SK-N-SH (cell line): ENCODE measurements at regions of chr5 and their contacts with region 1.

Region 1: GRCh38 chr5:170225326-170226128 is 7.3 kb upstream of the C5orf58 start:
- DNase-seq: peak; percentile 70
- H3K4me3 ChIP-seq: no peak overlapping the region; a peak in 1 of 4 replicates
- H3K27ac ChIP-seq: peak overlapping the region in 1 of 2 experiments; percentile 65; a peak in 2 of 4 replicates
- H3K4me1 ChIP-seq: peaks cover 3 to 21% of the 10 kb centered on the region in 2 experiments; a peak in 2 of 4 replicates
- H3K27me3 ChIP-seq: no peaks in the 10 kb centered on the region
- CTCF ChIP-seq: peak; percentile 89
- EP300 ChIP-seq: no peak
- RAD21 ChIP-seq: peak; percentile 93

Region 2: GRCh38 chr5:170195961-170196360 is 29.6 kb before region 1 on chr5:
- CTCF ChIA-PET with region 1: interaction called, 11 read pairs
- POLR2A ChIA-PET with region 1: no interaction called
- DNase-seq: no peak
- H3K4me3 ChIP-seq: no peak overlapping the region
- H3K27ac ChIP-seq: no peak overlapping the region
- H3K4me1 ChIP-seq: peaks cover 0 to 11% of the 10 kb centered on the region in 2 experiments; a peak in 1 of 4 replicates
- H3K27me3 ChIP-seq: peaks cover 4% of the 10 kb centered on the region; the same call in 1 of the 2 replicates
- CTCF ChIP-seq: no peak
- EP300 ChIP-seq: no peak
- RAD21 ChIP-seq: no peak

Region 3: DNA sequence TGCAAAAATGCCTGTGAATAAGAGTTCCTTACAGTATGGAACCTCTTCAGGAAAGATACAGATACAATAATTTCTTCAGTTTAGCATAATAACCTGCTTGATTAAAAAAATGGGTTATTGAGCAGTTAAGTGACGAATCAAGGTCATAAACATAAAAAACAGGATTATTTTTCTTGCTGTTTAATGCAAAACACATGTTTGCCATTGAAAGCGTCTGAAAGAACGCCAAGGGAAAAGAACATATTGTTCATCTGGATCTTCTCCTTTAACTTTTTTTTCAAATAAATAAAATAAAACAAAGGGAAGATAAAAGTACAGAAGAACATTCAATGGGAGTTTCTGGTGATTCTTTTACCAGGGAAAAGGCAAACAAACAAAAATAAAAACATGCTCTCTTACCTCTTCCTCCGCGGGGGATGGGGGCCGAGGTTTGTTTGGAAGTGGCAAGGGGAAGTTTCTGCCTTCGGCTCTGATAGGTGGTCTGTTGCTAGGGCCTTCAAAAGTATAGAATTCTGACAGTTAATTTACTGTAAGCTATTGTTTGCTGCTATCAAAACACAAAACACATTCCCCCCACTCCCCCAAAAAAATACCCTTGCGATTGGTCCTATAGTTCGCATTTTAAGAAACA is 27.3 kb after region 1 on chr5:
- CTCF ChIA-PET with region 1: interaction called, 13 read pairs
- POLR2A ChIA-PET with region 1: no interaction called
- DNase-seq: peak; percentile 46
- H3K4me3 ChIP-seq: no peak overlapping the region
- H3K27ac ChIP-seq: peak overlapping the region in 1 of 2 experiments; percentile 55; a peak in 1 of 4 replicates
- H3K4me1 ChIP-seq: peaks cover 0 to 10% of the 10 kb centered on the region in 2 experiments; a peak in 2 of 4 replicates
- H3K27me3 ChIP-seq: peaks cover 10% of the 10 kb centered on the region; the same call in 1 of the 2 replicates
- CTCF ChIP-seq: no peak
- EP300 ChIP-seq: no peak
- RAD21 ChIP-seq: no peak

Region 4: GRCh38 chr5:170380361-170380951 is 154.9 kb after region 1 on chr5:
- CTCF ChIA-PET with region 1: interaction called, 12 read pairs
- POLR2A ChIA-PET with region 1: no interaction called
- DNase-seq: peak; percentile 58
- H3K4me3 ChIP-seq: no peak overlapping the region
- H3K27ac ChIP-seq: no peak overlapping the region
- H3K4me1 ChIP-seq: peaks cover 0 to 8% of the 10 kb centered on the region in 2 experiments; a peak in 1 of 4 replicates
- H3K27me3 ChIP-seq: no peaks in the 10 kb centered on the region
- CTCF ChIP-seq: no peak
- EP300 ChIP-seq: no peak
- RAD21 ChIP-seq: no peak

Region 5: GRCh38 chr5:170429014-170429413 is 203.5 kb after region 1 on chr5:
- CTCF ChIA-PET with region 1: interaction called, 257 read pairs
- POLR2A ChIA-PET with region 1: no interaction called
- DNase-seq: peak; percentile 28
- H3K4me3 ChIP-seq: no peak overlapping the region
- H3K27ac ChIP-seq: no peak overlapping the region
- H3K4me1 ChIP-seq: peaks cover 0 to 33% of the 10 kb centered on the region in 2 experiments; a peak in 2 of 4 replicates
- H3K27me3 ChIP-seq: no peaks in the 10 kb centered on the region; the same call in 1 of the 2 replicates
- CTCF ChIP-seq: peak; percentile 35
- EP300 ChIP-seq: no peak
- RAD21 ChIP-seq: no peak

Region 6: GRCh38 chr5:170633235-170634081 is 407.9 kb after region 1 on chr5:
- CTCF ChIA-PET with region 1: interaction called, 37 read pairs
- POLR2A ChIA-PET with region 1: no interaction called
- DNase-seq: peak; percentile 88
- H3K4me3 ChIP-seq: peak overlapping the region; percentile 43 to 74
- H3K27ac ChIP-seq: peak overlapping the region; percentile 91 to 96
- H3K4me1 ChIP-seq: peaks cover 7 to 31% of the 10 kb centered on the region in 2 experiments; a peak in 2 of 4 replicates
- H3K27me3 ChIP-seq: no peaks in the 10 kb centered on the region
- CTCF ChIP-seq: no peak
- EP300 ChIP-seq: no peak
- RAD21 ChIP-seq: no peak